Caco-2 (cell line): ENCODE measurements at regions of chr12 and their contacts with region 1.

Region 1: GRCh38 chr12:32533971-32534590 is 134.7 kb downstream of the FGD4 start:
- DNase-seq: peak; percentile 85 to 88
- H3K4me3 ChIP-seq: no peak overlapping the region; the same call in 1 of the 2 replicates
- H3K4me3 Mint-ChIP-seq: peak overlapping the region; percentile 62
- H3K27ac Mint-ChIP-seq: peak overlapping the region; percentile 74
- H3K4me1 ChIP-seq: peaks cover 46% of the 10 kb centered on the region
- H3K4me1 Mint-ChIP-seq: peaks cover 40% of the 10 kb centered on the region
- H3K27me3 ChIP-seq: no peaks in the 10 kb centered on the region
- H3K27me3 Mint-ChIP-seq: no peaks in the 10 kb centered on the region
- CTCF ChIP-seq: no peak

Region 2: GRCh38 chr12:32489070-32489469 is 45.0 kb before region 1 on chr12:
- CTCF ChIA-PET with region 1: no interaction called
- POLR2A ChIA-PET with region 1: no interaction called
- intact Hi-C with region 1: no loop called
- DNase-seq: no peak
- H3K4me3 ChIP-seq: no peak overlapping the region
- H3K4me3 Mint-ChIP-seq: no peak overlapping the region
- H3K27ac Mint-ChIP-seq: no peak overlapping the region
- H3K4me1 ChIP-seq: peaks cover 13% of the 10 kb centered on the region
- H3K4me1 Mint-ChIP-seq: peaks cover 15% of the 10 kb centered on the region
- H3K27me3 ChIP-seq: no peaks in the 10 kb centered on the region
- H3K27me3 Mint-ChIP-seq: no peaks in the 10 kb centered on the region
- CTCF ChIP-seq: no peak

Region 3: GRCh38 chr12:32501835-32502333 is 32.2 kb before region 1 on chr12:
- CTCF ChIA-PET with region 1: no interaction called
- POLR2A ChIA-PET with region 1: no interaction called
- intact Hi-C with region 1: loop called (anchors 1 kb)
- DNase-seq: peak; percentile 91 to 92
- H3K4me3 ChIP-seq: peak overlapping the region; percentile 36
- H3K4me3 Mint-ChIP-seq: peak overlapping the region; percentile 58
- H3K27ac Mint-ChIP-seq: peak overlapping the region; percentile 71
- H3K4me1 ChIP-seq: peaks cover 22% of the 10 kb centered on the region
- H3K4me1 Mint-ChIP-seq: peaks cover 34% of the 10 kb centered on the region
- H3K27me3 ChIP-seq: no peaks in the 10 kb centered on the region
- H3K27me3 Mint-ChIP-seq: no peaks in the 10 kb centered on the region
- CTCF ChIP-seq: no peak

Region 4: GRCh38 chr12:32659908-32660440 is 125.9 kb after region 1 on chr12:
- CTCF ChIA-PET with region 1: interaction called, 3 read pairs
- POLR2A ChIA-PET with region 1: no interaction called
- intact Hi-C with region 1: loop called (anchors 10 kb)
- DNase-seq: peak in 1 of 2 experiments; percentile 27
- H3K4me3 ChIP-seq: no peak overlapping the region
- H3K4me3 Mint-ChIP-seq: no peak overlapping the region
- H3K27ac Mint-ChIP-seq: no peak overlapping the region
- H3K4me1 ChIP-seq: no peaks in the 10 kb centered on the region
- H3K4me1 Mint-ChIP-seq: no peaks in the 10 kb centered on the region
- H3K27me3 ChIP-seq: no peaks in the 10 kb centered on the region
- H3K27me3 Mint-ChIP-seq: no peaks in the 10 kb centered on the region
- CTCF ChIP-seq: no peak

Region 5: DNA sequence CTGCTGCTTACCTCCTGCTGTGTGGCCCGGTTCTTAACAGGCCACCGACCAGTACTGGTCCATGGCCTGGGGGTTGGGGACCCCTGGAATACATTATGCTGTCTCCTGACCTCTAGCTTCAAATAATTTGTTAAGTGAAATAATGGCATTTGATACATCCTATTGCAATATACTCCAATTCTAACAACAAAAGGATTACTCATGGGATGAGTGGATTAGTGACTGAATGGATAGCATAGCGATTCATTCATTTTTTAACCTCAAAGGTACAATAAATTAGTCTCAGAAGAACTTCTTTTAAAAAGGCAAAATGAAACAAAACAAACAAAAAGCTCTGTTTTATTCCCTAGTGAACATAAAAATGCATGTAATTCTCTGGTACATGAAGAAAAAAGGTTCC is 510.4 kb after region 1 on chr12:
- CTCF ChIA-PET with region 1: no interaction called
- POLR2A ChIA-PET with region 1: no interaction called
- intact Hi-C with region 1: no loop called
- DNase-seq: no peak
- H3K4me3 ChIP-seq: no peak overlapping the region
- H3K4me3 Mint-ChIP-seq: no peak overlapping the region
- H3K27ac Mint-ChIP-seq: no peak overlapping the region
- H3K4me1 ChIP-seq: no peaks in the 10 kb centered on the region
- H3K4me1 Mint-ChIP-seq: no peaks in the 10 kb centered on the region
- H3K27me3 ChIP-seq: no peaks in the 10 kb centered on the region
- H3K27me3 Mint-ChIP-seq: no peaks in the 10 kb centered on the region
- CTCF ChIP-seq: no peak